ENCODE measurements at regions of chr9 and their contacts with region 1.

Region 1: DNA sequence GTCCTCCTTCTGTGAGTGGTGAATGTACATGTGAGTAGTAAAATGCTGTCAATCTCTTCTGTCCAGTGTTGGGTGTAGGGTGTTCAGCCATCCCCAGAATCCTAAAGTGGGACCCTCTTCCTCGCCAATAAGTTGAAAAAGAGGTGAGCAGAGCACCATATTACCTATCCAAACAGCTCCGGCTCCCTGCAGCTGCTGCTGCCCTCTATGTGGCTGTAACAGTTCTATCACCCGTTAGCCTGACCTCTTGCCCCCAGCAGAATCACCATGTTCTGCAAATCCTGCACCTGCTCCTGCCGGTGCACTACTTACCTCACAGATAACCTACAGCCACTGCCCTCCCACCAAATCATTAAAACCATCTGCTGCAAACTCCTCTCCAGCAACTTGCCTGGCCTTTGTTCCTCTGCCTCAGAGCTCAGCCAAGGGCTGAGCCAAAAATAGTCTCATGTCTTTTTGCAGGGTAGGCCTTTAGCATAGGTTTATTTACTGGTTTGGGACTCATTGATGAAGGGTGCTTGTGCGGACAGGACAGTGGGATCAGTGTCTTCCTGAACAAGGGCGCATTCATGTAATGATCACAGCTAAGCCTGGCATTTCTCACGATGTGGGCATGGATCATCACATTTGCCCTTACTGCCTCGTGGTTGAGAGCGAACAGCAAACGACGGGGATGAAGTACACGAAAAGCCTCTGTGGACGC is 49.6 kb upstream of the CCL21 start:
- DNase-seq: no peak
- H3K4me3 Mint-ChIP-seq: no peak overlapping the region
- H3K27ac Mint-ChIP-seq: no peak overlapping the region
- H3K4me1 Mint-ChIP-seq: no peaks in the 10 kb centered on the region
- H3K27me3 Mint-ChIP-seq: peaks cover 51% of the 10 kb centered on the region
- CTCF ChIP-seq: no peak

Region 2: DNA sequence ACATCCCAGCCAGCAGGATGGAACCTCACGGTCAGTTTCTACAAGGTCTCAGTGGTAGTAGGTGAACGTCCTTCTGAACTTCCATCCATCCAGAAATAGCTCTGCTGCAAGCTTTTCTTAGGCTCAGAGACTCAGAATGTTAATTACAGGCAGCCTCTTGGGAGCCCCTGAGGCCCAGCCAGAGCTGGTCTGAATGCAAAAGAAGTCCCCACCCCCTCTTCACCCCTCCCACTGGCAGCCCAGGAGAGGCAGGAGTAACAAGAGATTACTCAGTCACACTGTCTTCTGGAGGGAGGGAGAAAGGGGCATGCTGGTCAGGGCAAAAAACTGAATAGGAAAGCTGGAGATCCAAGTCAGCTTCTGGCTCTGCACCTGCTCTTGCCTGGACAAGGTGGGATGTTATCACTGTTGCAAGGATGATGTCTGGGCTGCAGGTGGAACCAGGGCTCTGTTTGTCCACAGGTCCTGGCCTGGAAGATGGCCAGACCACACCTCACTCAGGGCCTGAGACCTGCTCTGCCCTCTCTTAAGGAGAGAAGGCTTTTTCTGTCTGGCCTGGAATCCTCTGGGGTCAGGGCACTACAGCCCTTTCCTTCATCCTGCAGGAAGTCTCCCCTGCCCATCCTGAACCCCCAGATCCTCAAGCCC is 245.9 kb before region 1 on chr9:
- CTCF ChIA-PET with region 1: no interaction called
- intact Hi-C with region 1: no loop called
- DNase-seq: no peak
- H3K4me3 Mint-ChIP-seq: no peak overlapping the region
- H3K27ac Mint-ChIP-seq: no peak overlapping the region
- H3K4me1 Mint-ChIP-seq: no peaks in the 10 kb centered on the region
- H3K27me3 Mint-ChIP-seq: peaks cover 75% of the 10 kb centered on the region
- CTCF ChIP-seq: no peak

Region 3: DNA sequence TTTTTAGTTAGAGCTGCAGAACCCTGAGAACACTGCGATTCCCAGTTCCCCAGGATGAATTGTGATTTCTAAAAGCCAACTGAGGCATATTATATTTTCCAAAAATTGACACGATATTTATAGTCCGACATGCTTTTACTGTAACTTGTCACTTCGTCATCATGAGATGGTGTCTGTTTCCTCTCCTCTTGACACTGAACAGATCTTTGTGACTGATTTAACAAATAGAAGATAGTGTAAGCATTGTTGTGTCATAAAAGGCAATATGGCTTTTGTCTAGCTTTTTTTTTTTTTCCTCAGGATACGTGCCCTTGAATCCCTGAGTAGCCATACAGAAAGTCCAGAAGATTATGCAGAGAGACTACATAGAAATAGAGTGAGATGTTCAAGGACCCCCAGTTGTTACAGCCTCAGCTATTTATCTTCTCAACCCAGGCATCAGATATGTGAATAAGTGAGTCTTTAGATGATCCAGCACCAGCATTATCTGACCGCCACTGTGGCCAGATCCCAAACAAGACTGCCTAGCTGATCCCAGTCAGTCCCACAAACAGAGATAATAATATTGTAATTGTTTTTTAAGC is 21.8 kb before region 1 on chr9:
- CTCF ChIA-PET with region 1: no interaction called
- intact Hi-C with region 1: no loop called
- DNase-seq: no peak
- H3K4me3 Mint-ChIP-seq: no peak overlapping the region
- H3K27ac Mint-ChIP-seq: no peak overlapping the region
- H3K4me1 Mint-ChIP-seq: no peaks in the 10 kb centered on the region
- H3K27me3 Mint-ChIP-seq: peaks cover 30% of the 10 kb centered on the region
- CTCF ChIP-seq: no peak

Region 4: DNA sequence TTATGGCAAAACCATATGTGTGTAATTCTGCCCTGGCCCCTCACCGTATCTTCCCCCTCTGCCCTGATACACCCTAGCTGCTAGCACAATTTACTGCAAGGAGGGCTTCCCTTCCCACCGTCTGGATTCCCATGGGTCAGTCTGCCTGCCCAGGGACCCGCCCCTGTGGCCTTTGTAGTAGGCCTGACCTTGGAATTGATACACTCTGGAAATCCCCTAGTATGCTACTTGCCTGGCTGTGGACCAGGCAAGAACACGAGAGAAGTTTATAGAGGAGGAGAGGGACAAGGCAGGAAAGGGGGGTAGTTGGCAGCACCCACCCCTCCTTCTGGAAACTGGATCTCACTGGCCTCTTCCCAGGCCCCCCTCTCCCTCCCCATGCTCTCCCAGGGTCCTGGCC is 66.2 kb after region 1 on chr9:
- CTCF ChIA-PET with region 1: no interaction called
- intact Hi-C with region 1: no loop called
- DNase-seq: no peak
- H3K4me3 Mint-ChIP-seq: no peak overlapping the region
- H3K27ac Mint-ChIP-seq: no peak overlapping the region
- H3K4me1 Mint-ChIP-seq: no peaks in the 10 kb centered on the region
- H3K27me3 Mint-ChIP-seq: peaks cover 38% of the 10 kb centered on the region
- CTCF ChIP-seq: no peak

Region 5: GRCh38 chr9:34989003-34989945 is 229.7 kb after region 1 on chr9 and contains the start of gene DNAJB5:
- CTCF ChIA-PET with region 1: interaction called, 7 read pairs
- intact Hi-C with region 1: loop called (anchors 5 kb)
- DNase-seq: peak; percentile 94
- H3K4me3 Mint-ChIP-seq: peak within 1 kb of the TSS; percentile 71
- H3K27ac Mint-ChIP-seq: peak within 1 kb of the TSS; percentile 97
- H3K4me1 Mint-ChIP-seq: peaks cover 31% of the 10 kb centered on the region
- H3K27me3 Mint-ChIP-seq: peaks cover 47% of the 10 kb centered on the region
- CTCF ChIP-seq: no peak
- total RNA-seq, gene DNAJB5: 1.5 and 3.1 TPM in 2 replicates

Measured in Calu3 (cell line).